ENCODE measurements at regions of chr20 and their contacts with region 1.

Region 1: GRCh38 chr20:31723319-31724078 is 831 bp upstream of the BCL2L1 start:
- DNase-seq: peak; percentile 99
- H3K4me3 ChIP-seq: peak overlapping the region; percentile 66
- H3K27ac ChIP-seq: peak overlapping the region; percentile 89
- H3K4me1 ChIP-seq: peaks cover 31% of the 10 kb centered on the region
- H3K27me3 ChIP-seq: no peaks in the 10 kb centered on the region
- CTCF ChIP-seq: peak; percentile 95

Region 2: DNA sequence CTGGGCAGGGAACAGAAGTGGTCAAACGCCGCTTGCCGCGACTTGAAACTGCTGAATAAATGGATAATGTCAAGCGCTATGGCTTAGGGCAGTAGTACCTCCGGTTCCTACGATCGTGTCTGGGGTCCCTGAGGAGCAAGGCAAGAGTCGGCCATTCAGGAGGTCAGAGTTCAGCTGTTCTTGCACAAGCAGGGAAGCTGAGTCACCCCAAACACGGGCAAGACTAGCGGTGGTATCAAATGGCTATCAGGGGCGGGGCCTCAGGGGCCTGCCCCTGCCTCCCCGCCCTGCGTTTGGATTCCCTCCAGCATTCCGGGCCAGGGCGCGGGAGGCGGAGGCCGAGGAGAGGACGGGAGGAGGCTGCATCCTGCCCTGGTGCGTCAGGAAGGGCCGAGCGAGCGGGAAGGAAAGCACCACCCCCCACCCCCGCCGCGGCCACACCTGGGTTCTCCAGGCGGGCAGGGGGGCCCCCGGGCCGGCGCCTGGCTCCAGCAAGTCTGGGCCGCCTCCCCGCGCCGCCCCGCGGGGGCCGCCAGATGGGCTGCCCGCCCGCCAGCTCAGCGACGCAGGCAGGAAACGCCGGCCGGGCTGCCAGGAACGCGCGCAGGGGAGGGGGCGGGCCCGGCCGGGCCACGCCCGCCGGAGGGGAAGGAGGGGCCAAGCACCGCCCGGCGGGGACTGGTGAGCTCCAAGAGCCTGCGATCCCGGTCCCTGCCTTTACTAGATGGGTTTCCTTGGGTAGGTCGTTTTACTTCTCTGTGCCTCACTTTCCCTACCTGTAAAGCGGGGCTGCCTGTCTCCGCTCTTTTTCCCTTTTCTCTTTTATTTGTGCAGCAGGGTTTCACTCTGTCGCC is 150.6 kb before region 1 on chr20:
- CTCF ChIA-PET with region 1: no interaction called
- POLR2A ChIA-PET with region 1: interaction called, 3 read pairs
- intact Hi-C with region 1: loop called (anchors 2 kb)
- DNase-seq: peak; percentile 97
- H3K4me3 ChIP-seq: peak overlapping the region; percentile 51
- H3K27ac ChIP-seq: peak overlapping the region; percentile 94
- H3K4me1 ChIP-seq: peaks cover 20% of the 10 kb centered on the region
- H3K27me3 ChIP-seq: no peaks in the 10 kb centered on the region
- CTCF ChIP-seq: no peak

Region 3: GRCh38 chr20:31661625-31662371 is 61.7 kb before region 1 on chr20:
- CTCF ChIA-PET with region 1: interaction called, 129 read pairs
- POLR2A ChIA-PET with region 1: interaction called, 10 read pairs
- intact Hi-C with region 1: loop called (anchors 1 kb)
- DNase-seq: peak; percentile 81
- H3K4me3 ChIP-seq: peak overlapping the region; percentile 44
- H3K27ac ChIP-seq: peak overlapping the region; percentile 29
- H3K4me1 ChIP-seq: peaks cover 10% of the 10 kb centered on the region
- H3K27me3 ChIP-seq: no peaks in the 10 kb centered on the region
- CTCF ChIP-seq: peak; percentile 80

Region 4: GRCh38 chr20:31712564-31713311 is 10.8 kb before region 1 on chr20:
- CTCF ChIA-PET with region 1: interaction called, 9 read pairs
- POLR2A ChIA-PET with region 1: no interaction called
- intact Hi-C with region 1: loop called (anchors 1 kb)
- DNase-seq: peak; percentile 74
- H3K4me3 ChIP-seq: peak overlapping the region; percentile 28
- H3K27ac ChIP-seq: peak overlapping the region; percentile 95
- H3K4me1 ChIP-seq: peaks cover 64% of the 10 kb centered on the region
- H3K27me3 ChIP-seq: no peaks in the 10 kb centered on the region
- CTCF ChIP-seq: no peak

Measured in A673 (cell line).